ENCODE measurements at regions of chr18 and their contacts with region 1.

Region 1: GRCh38 chr18:62505669-62506494 is 16.9 kb upstream of the ZCCHC2 start:
- DNase-seq: peak; percentile 66
- H3K4me3 Mint-ChIP-seq: peak overlapping the region; percentile 58
- H3K27ac Mint-ChIP-seq: peak overlapping the region; percentile 88
- H3K4me1 Mint-ChIP-seq: peaks cover 24% of the 10 kb centered on the region
- H3K27me3 Mint-ChIP-seq: no peaks in the 10 kb centered on the region

Region 2: DNA sequence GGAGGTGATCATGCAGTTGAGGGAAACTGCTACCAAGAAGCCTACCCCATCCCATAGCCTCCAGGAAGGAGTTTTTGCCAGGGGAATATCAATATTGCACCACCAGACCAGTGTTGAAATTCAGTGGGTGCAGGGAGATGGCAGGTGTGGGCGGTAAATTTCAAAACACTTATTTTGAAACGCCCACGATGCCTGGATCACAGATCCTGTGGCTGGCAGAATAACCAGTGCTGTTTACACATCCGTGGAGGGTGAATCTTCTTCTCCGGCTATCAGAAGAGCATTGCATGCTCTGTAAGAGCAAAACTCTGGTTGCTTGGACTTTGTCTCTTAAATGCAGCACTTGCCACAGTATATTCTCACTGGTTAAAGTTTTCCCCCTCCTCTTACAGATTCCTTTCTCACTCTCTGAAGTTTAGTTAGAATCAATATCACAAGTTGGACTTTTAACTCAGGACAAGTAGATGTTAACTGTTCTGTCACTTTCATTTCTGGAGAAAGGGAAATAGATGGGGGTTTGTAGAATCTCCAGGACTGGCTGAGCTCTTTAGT is 53.5 kb before region 1 on chr18:
- CTCF ChIA-PET with region 1: no interaction called
- POLR2A ChIA-PET with region 1: no interaction called
- intact Hi-C with region 1: loop called (anchors 2 kb)
- DNase-seq: peak; percentile 67
- H3K4me3 Mint-ChIP-seq: no peak overlapping the region
- H3K27ac Mint-ChIP-seq: no peak overlapping the region
- H3K4me1 Mint-ChIP-seq: peaks cover 22% of the 10 kb centered on the region
- H3K27me3 Mint-ChIP-seq: peaks cover 15% of the 10 kb centered on the region

Region 3: DNA sequence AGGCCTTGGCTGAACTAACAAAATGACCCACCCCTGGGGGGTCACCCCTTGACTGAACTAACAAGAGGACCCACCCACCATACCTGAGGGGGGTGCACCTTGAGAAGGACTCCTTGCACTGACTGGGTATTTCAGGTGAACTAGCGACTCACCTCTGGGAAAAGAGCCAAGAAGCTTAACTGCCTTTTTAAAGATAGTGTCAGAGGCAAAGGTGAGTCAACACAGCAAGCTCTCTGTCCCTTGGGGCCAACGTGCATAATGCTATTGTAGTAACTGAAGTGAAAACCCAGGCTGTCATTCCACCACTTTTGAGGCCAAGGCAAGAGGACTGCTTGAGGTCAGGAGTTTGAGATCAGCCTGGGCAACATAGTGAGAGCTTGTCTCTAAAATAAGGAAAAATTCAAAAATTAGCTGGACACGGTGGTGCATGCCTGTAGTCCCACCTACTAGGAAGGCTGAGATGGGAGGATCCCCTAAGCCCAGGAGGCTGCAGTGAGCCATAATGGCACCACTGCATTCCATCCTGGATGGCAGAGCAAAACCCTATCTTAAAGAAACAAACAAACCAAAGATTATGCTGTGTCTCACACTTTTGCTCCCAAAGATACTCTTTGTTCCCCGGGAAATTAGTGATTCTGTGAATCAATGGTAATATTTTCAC is 19.4 kb before region 1 on chr18:
- CTCF ChIA-PET with region 1: no interaction called
- POLR2A ChIA-PET with region 1: no interaction called
- intact Hi-C with region 1: loop called (anchors 1 kb)
- DNase-seq: peak; percentile 49
- H3K4me3 Mint-ChIP-seq: no peak overlapping the region
- H3K27ac Mint-ChIP-seq: no peak overlapping the region
- H3K4me1 Mint-ChIP-seq: peaks cover 11% of the 10 kb centered on the region
- H3K27me3 Mint-ChIP-seq: peaks cover 20% of the 10 kb centered on the region

Region 4: GRCh38 chr18:62566199-62566598 is 60.3 kb after region 1 on chr18:
- CTCF ChIA-PET with region 1: no interaction called
- POLR2A ChIA-PET with region 1: no interaction called
- intact Hi-C with region 1: no loop called
- DNase-seq: no peak
- H3K4me3 Mint-ChIP-seq: no peak overlapping the region
- H3K27ac Mint-ChIP-seq: no peak overlapping the region
- H3K4me1 Mint-ChIP-seq: peaks cover 5% of the 10 kb centered on the region
- H3K27me3 Mint-ChIP-seq: no peaks in the 10 kb centered on the region

Region 5: DNA sequence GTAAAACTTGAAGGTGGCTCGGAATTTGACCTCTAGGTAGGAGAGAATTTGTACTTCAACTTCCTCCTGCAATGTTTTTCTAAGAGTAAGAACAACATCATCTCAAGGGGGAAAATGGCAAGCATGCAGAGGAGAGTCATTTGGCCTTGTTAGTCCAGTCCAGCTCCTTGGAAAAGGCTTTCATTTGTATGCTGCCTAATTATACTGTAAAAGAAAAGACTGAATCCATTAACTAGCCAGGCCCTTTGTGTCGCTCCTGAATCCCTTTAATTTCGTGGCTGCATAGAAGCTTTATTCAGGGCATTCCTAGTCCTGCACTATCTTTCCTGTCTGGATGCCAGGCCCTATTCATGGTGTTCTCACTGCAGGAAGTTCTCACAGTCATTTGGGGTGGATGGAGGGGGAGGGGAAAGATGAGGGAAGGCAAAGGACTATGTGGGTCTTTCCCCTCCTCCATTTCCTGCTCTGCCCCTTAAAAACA is 245.5 kb after region 1 on chr18:
- CTCF ChIA-PET with region 1: no interaction called
- POLR2A ChIA-PET with region 1: no interaction called
- intact Hi-C with region 1: no loop called
- DNase-seq: no peak
- H3K4me3 Mint-ChIP-seq: no peak overlapping the region
- H3K27ac Mint-ChIP-seq: no peak overlapping the region
- H3K4me1 Mint-ChIP-seq: peaks cover 8% of the 10 kb centered on the region
- H3K27me3 Mint-ChIP-seq: peaks cover 2% of the 10 kb centered on the region

Measured in activated CD4-positive, alpha-beta memory T cell treated with anti-CD3 and anti-CD28 coated beads for 36 hours (primary cell).